Common myeloid progenitor, CD34-positive (primary cell): ENCODE measurements at regions of chr9 and their contacts with region 1.

Region 1: DNA sequence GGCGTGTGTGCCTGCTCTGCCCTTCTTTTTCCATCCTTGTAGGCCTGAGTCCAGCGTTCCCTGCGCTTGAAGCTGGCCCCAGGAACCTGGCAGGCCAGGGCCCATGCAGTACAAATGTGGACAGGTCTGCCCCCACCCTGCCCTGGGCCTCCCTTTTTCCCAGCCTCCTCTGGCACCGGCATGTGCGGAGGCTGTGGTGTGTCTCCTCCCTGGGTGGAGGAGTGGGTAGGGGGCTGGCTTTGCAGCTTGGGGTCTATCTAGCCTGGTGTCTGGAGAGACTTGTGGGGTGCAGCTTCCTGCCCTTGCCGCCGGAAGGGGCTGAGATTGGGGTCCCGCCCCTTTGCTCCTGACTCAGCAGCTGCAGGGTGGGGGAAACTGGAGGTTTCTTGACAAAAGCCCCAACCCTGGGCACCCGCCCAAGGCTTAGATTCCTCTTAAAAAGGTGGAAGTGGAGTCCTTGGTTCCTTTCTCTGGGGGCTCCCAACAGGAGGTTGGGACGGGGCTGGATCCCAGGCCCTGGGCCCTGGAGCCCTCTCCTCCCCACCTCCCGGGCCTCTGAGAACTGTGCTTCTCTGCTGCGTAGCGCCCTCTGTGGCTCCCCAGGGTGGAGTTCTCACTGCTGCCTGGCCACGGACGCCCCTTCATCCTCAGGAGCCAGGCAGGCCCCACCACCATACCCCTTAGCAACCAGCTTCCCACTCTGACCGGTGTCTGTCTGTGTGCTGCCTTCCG is 18.0 kb downstream of the RXRA start:
- DNase-seq: peak; percentile 80 to 93 (median 91)
- H3K4me3 ChIP-seq: peak overlapping the region in 4 of 7 experiments; percentile 22 to 42 (median 26)
- H3K27ac ChIP-seq: no peak overlapping the region
- H3K4me1 ChIP-seq: peaks cover 0 to 79% (median 68%) of the 10 kb centered on the region in 4 experiments
- H3K27me3 ChIP-seq: no peaks in the 10 kb centered on the region

Region 2: DNA sequence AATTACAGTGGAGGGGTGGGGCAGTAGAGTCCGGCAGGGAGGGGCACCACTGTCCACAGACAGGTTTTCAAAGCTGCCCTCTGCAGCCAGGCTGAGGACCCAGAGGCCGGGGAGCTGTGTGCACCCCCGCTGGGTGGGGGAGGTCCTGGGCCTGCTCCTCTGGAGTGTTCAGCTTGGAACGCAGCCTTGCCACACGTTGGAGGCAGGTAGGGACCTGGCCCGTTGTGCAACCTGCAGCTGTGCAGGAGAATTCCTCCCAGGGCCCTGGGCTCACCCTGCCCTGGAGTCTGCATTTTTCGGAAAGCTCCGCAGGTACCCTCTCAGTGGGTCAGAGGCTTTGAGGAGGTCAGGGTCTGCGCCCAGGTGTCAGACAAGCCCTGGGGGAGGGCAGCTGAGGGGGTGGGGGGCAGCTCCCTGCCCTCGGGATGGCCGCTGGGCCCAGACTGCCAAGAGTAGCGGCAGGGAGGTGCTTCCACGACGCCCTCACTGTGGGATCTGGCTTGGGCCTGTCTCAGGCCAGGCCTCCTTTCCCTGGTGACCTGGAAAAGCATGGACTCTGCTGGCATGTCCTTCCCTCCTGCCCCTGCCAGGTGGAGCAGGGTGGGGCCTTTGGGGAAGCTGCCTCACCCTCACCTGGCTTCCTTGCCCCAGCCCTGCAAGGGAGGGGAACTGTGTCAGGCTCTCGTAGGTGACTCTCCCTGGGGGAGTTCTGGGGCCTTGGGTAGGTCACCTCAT is 11.5 kb after region 1 on chr9:
- CTCF ChIA-PET with region 1: interaction called, 13 read pairs
- POLR2A ChIA-PET with region 1: interaction called, 3 read pairs
- DNase-seq: no peak
- H3K4me3 ChIP-seq: no peak overlapping the region
- H3K27ac ChIP-seq: no peak overlapping the region
- H3K4me1 ChIP-seq: peaks cover 0 to 51% (median 44%) of the 10 kb centered on the region in 4 experiments
- H3K27me3 ChIP-seq: no peaks in the 10 kb centered on the region

Region 3: DNA sequence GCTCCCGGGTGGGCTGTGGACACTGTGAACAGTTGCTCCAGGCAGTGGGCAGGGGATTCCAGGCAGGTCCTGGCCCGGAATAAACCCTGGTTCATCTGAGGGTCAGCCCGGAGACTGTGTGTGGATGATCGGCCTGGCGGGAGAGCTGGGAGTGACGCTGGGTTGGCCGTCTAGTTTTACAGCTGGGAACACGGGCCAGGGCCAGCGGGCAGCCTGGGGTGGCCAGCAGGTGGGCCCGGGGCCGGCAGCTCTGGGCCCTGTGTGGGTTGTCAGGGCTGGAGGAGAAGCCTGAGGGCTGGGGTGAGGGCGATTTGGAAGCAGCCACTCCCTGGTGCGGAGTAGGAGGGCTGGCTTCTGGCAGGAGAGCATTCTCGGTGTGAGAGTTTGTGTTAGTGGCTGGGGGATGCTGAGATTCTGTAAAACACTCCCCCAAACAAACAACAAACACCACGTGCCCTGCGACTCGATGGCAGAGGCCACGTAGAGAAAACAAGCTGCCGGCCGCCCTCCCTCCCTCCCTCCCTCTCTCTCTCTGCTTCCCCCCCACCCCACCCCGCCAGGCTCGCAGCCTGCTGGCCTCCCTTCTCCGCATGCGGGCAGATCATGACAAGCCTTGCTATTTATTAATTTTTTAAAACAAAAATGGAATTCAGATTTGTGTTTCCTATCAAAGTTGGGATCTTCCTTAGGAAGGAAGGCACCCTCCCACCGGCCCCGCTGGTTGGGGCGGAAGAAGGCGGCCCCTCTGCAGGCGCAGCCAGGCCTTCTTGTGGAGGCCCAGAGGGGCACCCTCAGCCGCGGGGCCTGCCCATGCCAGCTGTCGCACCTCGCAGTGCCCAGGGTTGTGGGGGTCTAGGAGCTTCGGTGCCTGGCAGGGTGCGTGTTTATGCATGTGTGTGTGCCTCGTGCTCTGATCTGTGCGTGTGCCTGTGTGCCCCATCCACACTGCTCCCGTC is 31.5 kb after region 1 on chr9:
- CTCF ChIA-PET with region 1: interaction called, 12 read pairs
- POLR2A ChIA-PET with region 1: no interaction called
- DNase-seq: peak in 2 of 3 donors; percentile 53 to 69
- H3K4me3 ChIP-seq: peak overlapping the region in 2 of 7 experiments; percentile 4 to 16
- H3K27ac ChIP-seq: no peak overlapping the region
- H3K4me1 ChIP-seq: peaks cover 0 to 89% (median 64%) of the 10 kb centered on the region in 4 experiments
- H3K27me3 ChIP-seq: no peaks in the 10 kb centered on the region